ENCODE measurements at regions of chr2 and their contacts with region 1.

Region 1: GRCh38 chr2:43239981-43240761 is 13.8 kb upstream of the ZFP36L2 start:
- DNase-seq: no peak
- H3K4me3 ChIP-seq: no peak overlapping the region
- H3K27ac ChIP-seq: no peak overlapping the region
- H3K4me1 ChIP-seq: peaks cover 8% of the 10 kb centered on the region
- H3K27me3 ChIP-seq: no peaks in the 10 kb centered on the region

Region 2: DNA sequence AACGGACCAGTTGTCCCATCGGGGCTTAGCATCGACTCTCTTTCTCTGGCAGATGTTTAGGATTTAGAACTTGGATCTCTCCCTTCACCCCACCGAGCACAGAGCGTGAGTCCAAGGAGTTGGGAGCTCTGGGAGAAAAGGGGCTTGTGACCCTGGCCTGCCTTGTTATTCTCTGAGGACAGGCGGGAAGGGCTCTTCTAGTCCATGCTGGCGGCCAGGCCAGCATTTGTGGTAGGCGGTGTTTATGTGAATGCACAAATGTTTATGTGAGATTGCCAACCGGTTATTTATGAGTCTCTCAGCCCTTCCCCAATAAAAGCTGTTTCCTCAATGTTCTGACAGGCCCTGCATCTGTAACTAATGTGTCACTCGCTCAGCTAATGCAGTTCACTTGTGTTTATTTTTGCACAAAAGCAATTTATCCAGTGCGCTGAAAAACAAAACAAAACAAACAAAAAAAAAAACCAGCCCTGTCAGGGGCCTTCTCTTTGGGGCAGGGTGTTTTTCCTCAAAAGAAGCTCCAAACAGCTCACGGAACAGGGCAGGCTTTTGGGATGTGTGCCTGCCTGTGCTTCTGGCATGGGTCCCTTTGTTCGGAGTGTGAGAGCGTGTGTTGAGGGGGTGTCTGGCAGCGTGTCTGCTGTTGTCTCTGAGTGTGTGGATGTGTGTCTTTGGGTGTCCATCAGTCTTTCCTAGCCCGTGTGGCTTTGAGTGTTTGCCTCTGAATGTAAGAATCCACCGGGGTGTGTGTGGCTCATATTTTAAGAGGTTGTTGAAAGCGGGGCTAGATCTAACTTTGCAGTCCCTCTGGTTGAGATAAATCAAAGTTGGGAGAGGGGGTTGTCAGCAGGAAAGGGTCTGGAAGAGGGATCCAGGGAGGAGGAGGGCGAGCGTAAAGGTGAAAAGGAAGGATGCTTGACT is 395.0 kb before region 1 on chr2:
- in situ Hi-C with region 1: loop called (anchors 10 kb)
- DNase-seq: peak; percentile 67
- H3K4me3 ChIP-seq: 0 out of 2 replicates have a peak overlapping the region, but pooled peaks have one; percentile 5
- H3K27ac ChIP-seq: 0 out of 2 replicates have a peak overlapping the region, but pooled peaks have one; percentile 3
- H3K4me1 ChIP-seq: peaks cover 29% of the 10 kb centered on the region
- H3K27me3 ChIP-seq: no peaks in the 10 kb centered on the region

Region 3: DNA sequence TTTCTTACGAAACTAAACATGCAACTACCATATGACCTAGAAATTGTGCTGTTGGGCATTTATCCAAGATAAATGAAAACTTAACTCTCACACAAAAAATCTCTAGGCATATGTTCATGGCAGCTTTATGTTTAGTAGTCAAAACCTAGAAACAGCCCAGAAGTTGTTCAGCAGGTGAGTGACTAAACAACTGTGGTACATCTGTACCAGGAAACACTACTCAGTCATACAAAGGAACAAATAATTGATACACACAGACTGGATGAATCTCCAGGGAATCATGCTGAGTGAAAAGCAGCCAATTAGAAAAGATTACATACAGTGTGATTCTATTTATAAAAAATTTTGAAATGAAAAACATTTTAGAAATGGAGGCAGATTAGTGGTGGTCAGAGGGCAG is 562.9 kb after region 1 on chr2:
- in situ Hi-C with region 1: no loop called
- DNase-seq: no peak
- H3K4me3 ChIP-seq: no peak overlapping the region
- H3K27ac ChIP-seq: no peak overlapping the region
- H3K4me1 ChIP-seq: no peaks in the 10 kb centered on the region
- H3K27me3 ChIP-seq: no peaks in the 10 kb centered on the region

Measured in GM23248 (cell line).